Activated B cell treated with CpG ODN at 0.5 μM for 24 hours (primary cell): ENCODE measurements at regions of chr13 and their contacts with region 1.

Region 1: DNA sequence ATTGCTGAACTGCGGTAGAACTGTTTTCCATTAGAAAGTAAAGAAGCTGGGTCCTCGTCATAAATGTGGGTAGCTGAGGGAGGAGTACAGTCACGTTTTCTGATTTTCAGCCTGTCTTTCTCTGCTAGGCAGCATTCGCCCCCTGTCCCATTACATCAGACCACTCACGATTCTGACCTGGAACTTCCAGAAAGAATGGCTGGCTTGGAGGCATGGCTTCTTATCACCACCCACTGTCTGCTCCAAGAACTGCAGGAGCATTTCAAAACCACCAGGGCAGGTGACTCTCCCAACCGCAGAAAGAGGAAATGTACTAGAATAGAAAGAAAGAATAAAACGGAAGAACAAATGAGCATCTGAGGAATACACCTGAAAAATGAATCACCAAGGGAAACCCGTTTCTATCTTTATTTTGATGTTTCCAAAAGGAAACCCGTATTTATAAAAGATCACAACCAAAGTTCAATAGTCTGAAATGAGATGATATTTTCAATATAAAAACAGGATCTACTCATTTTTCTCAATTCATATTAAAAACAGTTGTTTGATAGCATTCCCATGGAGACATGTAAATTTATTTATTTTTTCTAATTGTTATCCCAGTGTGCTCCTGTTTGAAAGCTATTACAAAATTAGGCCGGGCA is 22.1 kb upstream of the POMP start:
- DNase-seq: no peak
- ATAC-seq: peak; percentile 74
- H3K4me3 Mint-ChIP-seq: peak overlapping the region; percentile 66
- H3K27ac Mint-ChIP-seq: peak overlapping the region; percentile 74
- H3K4me1 Mint-ChIP-seq: peaks cover 36% of the 10 kb centered on the region
- H3K27me3 Mint-ChIP-seq: no peaks in the 10 kb centered on the region
- CTCF ChIP-seq: no peak

Region 2: GRCh38 chr13:28494776-28495537 is 141.8 kb before region 1 on chr13 and contains the start of gene FLT1:
- CTCF ChIA-PET with region 1: no interaction called
- POLR2A ChIA-PET with region 1: no interaction called
- intact Hi-C with region 1: loop called (anchors 10 kb)
- DNase-seq: peak; percentile 35
- ATAC-seq: peak; percentile 42
- H3K4me3 Mint-ChIP-seq: peak within 1 kb of the TSS; percentile 71
- H3K27ac Mint-ChIP-seq: no peak within 1 kb of the TSS
- H3K4me1 Mint-ChIP-seq: peaks cover 16% of the 10 kb centered on the region
- H3K27me3 Mint-ChIP-seq: peaks cover 29% of the 10 kb centered on the region
- CTCF ChIP-seq: no peak
- total RNA-seq, gene FLT1: 0.46 and 1.3 TPM in 2 replicates

Region 3: GRCh38 chr13:28805193-28805819 is 168.5 kb after region 1 on chr13:
- CTCF ChIA-PET with region 1: no interaction called
- POLR2A ChIA-PET with region 1: no interaction called
- intact Hi-C with region 1: no loop called
- DNase-seq: no peak
- ATAC-seq: no peak
- H3K4me3 Mint-ChIP-seq: no peak overlapping the region
- H3K27ac Mint-ChIP-seq: no peak overlapping the region
- H3K4me1 Mint-ChIP-seq: no peaks in the 10 kb centered on the region
- H3K27me3 Mint-ChIP-seq: peaks cover 23% of the 10 kb centered on the region
- CTCF ChIP-seq: no peak